Sigmoid colon (tissue), 7 donors: ENCODE measurements at regions of chr20 and their contacts with region 1.

Region 1: DNA sequence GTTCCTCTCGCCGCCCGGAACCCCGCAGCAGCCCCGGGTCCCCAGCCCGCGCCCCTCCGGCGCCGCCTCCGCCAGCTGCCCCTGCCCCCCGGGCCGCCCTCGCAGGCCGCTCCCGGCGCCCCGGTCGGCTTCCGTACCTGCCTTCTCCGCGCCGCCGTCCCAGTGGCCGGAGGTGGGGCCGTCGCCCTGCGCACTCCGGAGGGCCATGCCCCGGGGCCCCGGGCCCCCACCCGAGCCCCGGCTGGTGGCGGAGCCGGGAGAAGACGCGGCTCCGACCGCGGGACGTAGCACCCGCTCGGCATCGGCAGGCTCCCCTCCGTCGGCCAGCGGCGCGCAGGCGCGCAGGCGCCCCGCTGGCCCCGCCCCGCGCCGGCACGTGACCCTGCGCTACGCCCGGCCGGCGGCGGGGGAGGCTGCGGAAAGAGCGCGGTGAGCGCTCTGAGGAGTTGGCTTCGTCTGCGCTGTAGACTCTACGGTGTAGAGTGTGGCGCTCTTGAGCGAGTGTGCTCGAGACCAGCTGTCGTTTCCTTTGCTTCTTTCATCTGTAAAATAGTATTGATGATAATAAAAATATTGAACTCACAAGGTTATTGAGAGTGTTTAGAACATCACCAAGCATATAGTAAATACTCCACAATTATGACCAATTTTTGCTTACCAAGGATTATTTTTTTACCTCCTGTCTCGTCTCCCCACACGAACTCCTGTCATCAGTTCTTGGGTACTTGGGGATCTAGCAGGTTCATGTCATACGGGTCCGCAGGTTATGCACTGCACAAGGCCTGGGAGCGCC is at the start of gene TBC1D20:
- DNase-seq: peak; percentile 92
- H3K4me3 ChIP-seq: peak within 1 kb of the TSS; percentile 67 to 90 (median 86)
- H3K27ac ChIP-seq: peak within 1 kb of the TSS; percentile 92 to 97 (median 96)
- H3K4me1 ChIP-seq: peaks cover 0 to 40% (median 37%) of the 10 kb centered on the region in 4 donors
- H3K27me3 ChIP-seq: no peaks in the 10 kb centered on the region
- CTCF ChIP-seq: no peak
- EP300 ChIP-seq: no peak
- POLR2A ChIP-seq: no peak
- total RNA-seq, gene TBC1D20: 32.6 to 42.9 (median 35.3) TPM

Region 2: DNA sequence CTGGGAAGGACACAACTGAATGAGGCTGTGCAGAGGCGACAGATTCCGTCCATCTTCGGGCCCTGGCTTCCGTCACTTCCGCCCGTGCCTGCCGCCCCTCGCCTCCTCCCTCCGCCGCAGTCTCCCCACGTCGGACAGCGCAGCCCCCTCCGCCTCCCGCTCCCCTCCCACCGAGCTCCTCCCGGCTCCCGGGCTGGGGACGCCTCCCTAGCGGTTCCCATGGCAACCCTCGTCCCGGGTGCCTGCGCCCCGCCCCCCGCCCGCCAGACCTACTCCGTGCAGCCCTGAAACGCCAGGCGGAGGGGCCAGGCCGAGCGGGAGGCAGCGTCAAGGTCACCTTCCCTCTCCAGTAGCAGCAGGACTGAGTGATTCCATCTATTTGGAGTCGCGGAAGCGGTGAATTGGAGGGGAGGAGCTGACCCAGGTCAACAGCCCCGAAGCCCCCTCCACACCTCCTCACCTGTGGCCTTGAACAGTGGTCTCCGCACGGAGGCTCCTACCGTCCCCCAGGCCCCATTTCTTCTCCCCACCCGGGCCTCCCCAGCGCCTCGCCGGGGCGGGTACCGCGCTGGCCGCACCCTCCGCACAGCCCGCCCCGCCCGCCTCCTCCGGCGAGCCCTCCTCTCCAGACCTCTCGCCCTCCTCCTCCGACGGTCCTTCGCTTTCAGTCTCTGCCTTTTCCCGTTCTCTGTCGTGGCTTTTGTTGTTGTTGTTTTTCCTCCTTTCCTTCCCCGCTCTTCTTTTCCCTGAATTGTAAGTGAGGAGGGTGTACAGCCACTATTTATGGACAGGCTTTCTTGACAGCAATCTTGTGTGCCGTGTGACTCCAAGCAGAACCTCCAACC is 114.5 kb before region 1 on chr20:
- intact Hi-C with region 1: loop called (anchors 2 kb)
- DNase-seq: peak; percentile 98
- H3K4me3 ChIP-seq: peak overlapping the region; percentile 72 to 82 (median 79)
- H3K27ac ChIP-seq: peak overlapping the region; percentile 94 to 98 (median 96)
- H3K4me1 ChIP-seq: peaks cover 0 to 28% (median 19%) of the 10 kb centered on the region in 4 donors
- H3K27me3 ChIP-seq: no peaks in the 10 kb centered on the region
- CTCF ChIP-seq: no peak
- EP300 ChIP-seq: peak in 1 of 4 donors; percentile 46
- POLR2A ChIP-seq: peak; percentile 48